BJ (cell line): ENCODE measurements at regions of chr6 and their contacts with region 1.

Region 1: DNA sequence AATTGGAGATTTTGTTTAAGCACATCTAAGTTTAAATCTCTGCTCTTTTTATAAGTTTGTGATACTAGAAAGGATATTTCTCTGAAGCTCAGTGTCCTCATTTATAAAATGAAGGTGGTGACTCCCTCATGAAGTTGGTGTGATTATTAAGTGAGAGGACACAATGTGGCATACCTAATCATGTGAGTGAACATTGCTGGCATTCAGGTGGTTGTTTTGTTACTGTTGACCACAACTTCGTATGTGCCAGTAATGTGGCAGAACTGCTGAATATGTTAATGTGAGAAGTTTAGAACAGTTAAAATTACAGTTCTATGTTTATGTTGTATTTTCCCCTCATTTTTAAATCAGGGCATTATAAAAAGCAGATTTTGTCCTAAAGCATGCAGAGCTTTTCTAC is 127.2 kb downstream of the STXBP5 start:
- DNase-seq: no peak
- H3K4me3 ChIP-seq: no peak overlapping the region
- H3K27me3 ChIP-seq: no peaks in the 10 kb centered on the region
- CTCF ChIP-seq: no peak

Region 2: DNA sequence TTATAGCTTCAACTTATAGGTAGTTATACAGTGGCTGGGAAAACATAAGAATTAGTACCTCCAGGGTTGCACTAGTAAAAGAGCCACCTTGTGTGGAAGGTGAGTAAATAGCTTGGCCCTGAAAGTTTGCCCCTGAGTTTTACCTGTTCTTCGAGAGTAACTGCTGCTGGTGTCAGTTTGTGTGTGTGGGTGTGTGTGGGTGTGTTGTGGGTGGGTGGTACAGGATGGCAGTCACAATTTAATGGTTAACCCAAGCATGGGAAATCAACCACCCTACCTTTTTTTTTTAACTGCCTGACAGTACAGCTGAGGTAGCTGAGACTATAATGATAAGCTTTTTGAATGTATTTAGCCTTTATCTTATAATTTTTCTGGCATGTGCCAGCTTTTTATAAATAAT is 10.1 kb after region 1 on chr6:
- CTCF ChIA-PET with region 1: interaction called, 3 read pairs
- POLR2A ChIA-PET with region 1: interaction called, 17 read pairs
- DNase-seq: no peak
- H3K4me3 ChIP-seq: no peak overlapping the region
- H3K27me3 ChIP-seq: no peaks in the 10 kb centered on the region
- CTCF ChIP-seq: no peak

Region 3: DNA sequence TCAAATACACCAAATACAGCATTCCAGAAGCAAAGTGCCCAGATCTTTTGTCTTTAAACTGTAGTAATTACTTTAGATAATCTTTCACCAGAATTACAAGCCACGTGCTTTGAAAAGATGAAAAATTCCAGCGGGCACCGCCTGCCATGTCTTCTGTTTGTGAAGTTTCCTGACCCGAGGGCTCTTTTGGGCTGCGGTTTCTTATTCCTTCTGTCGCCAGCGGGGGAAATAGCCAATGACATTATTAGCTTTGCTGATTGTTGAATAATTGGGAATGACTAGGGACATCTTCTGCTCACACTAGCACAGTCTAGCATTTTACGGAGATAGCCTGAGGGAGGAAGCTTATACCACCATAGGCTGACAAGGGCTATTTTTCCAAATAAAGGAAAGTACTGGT is 301.8 kb after region 1 on chr6:
- CTCF ChIA-PET with region 1: no interaction called
- POLR2A ChIA-PET with region 1: no interaction called
- DNase-seq: no peak
- H3K4me3 ChIP-seq: no peak overlapping the region
- H3K27me3 ChIP-seq: no peaks in the 10 kb centered on the region
- CTCF ChIP-seq: no peak